ENCODE measurements at regions of chr1 and their contacts with region 1.

Region 1: DNA sequence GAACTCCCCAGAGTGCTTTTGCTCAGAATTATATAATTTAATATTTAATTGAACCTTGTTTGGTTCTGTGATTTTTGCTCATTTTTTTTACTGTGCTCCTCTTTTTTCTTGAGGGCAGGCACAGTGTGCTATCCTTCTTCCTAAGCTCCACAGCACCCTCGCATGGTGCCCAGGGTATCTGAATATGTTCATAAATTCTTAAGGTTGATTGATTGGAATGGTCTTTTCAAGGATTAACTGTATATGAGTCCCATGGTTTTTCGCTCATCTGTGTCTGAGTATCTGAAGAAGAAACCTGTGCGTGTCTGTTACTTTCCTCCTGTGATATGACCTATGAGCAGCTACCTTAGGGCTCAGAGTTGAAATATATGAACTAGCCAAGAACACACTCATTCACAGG is 393.7 kb downstream of the HLX start:
- DNase-seq: peak; percentile 68
- ATAC-seq: peak; percentile 88
- H3K4me3 ChIP-seq: no peak overlapping the region
- H3K27ac ChIP-seq: no peak overlapping the region
- H3K4me1 ChIP-seq: no peaks in the 10 kb centered on the region
- H3K27me3 ChIP-seq: no peaks in the 10 kb centered on the region
- CTCF ChIP-seq: peak; percentile 81

Region 2: GRCh38 chr1:220810179-220810653 is 462.7 kb before region 1 on chr1:
- CTCF ChIA-PET with region 1: no interaction called
- POLR2A ChIA-PET with region 1: no interaction called
- intact Hi-C with region 1: loop called (anchors 1 kb)
- DNase-seq: peak; percentile 83
- ATAC-seq: peak; percentile 72
- H3K4me3 ChIP-seq: no peak overlapping the region
- H3K27ac ChIP-seq: no peak overlapping the region
- H3K4me1 ChIP-seq: no peaks in the 10 kb centered on the region
- H3K27me3 ChIP-seq: no peaks in the 10 kb centered on the region
- CTCF ChIP-seq: peak; percentile 95

Region 3: GRCh38 chr1:220873868-220874655 is 398.9 kb before region 1 on chr1:
- CTCF ChIA-PET with region 1: interaction called, 7 read pairs
- POLR2A ChIA-PET with region 1: no interaction called
- intact Hi-C with region 1: loop called (anchors 1 kb)
- DNase-seq: peak; percentile 72
- ATAC-seq: peak; percentile 40
- H3K4me3 ChIP-seq: no peak overlapping the region
- H3K27ac ChIP-seq: no peak overlapping the region
- H3K4me1 ChIP-seq: peaks cover 8% of the 10 kb centered on the region; the same call in 1 of the 2 replicates
- H3K27me3 ChIP-seq: no peaks in the 10 kb centered on the region
- CTCF ChIP-seq: peak; percentile 97

Region 4: GRCh38 chr1:220990427-220991339 is 282.3 kb before region 1 on chr1:
- CTCF ChIA-PET with region 1: no interaction called
- POLR2A ChIA-PET with region 1: no interaction called
- intact Hi-C with region 1: loop called (anchors 1 kb)
- DNase-seq: peak; percentile 85
- ATAC-seq: peak; percentile 87
- H3K4me3 ChIP-seq: no peak overlapping the region
- H3K27ac ChIP-seq: peak overlapping the region; percentile 56
- H3K4me1 ChIP-seq: peaks cover 20% of the 10 kb centered on the region
- H3K27me3 ChIP-seq: no peaks in the 10 kb centered on the region
- CTCF ChIP-seq: peak; percentile 63

Region 5: GRCh38 chr1:221182791-221183533 is 90.0 kb before region 1 on chr1:
- CTCF ChIA-PET with region 1: no interaction called
- POLR2A ChIA-PET with region 1: no interaction called
- intact Hi-C with region 1: no loop called
- DNase-seq: no peak
- ATAC-seq: peak; percentile 56; the same call in 1 of the 2 replicates
- H3K4me3 ChIP-seq: no peak overlapping the region
- H3K27ac ChIP-seq: no peak overlapping the region
- H3K4me1 ChIP-seq: peaks cover 6% of the 10 kb centered on the region; the same call in 1 of the 2 replicates
- H3K27me3 ChIP-seq: no peaks in the 10 kb centered on the region
- CTCF ChIP-seq: no peak

Region 6: GRCh38 chr1:221449801-221450470 is 177.0 kb after region 1 on chr1:
- CTCF ChIA-PET with region 1: no interaction called
- POLR2A ChIA-PET with region 1: no interaction called
- intact Hi-C with region 1: no loop called
- DNase-seq: peak; percentile 76
- ATAC-seq: peak; percentile 62
- H3K4me3 ChIP-seq: peak overlapping the region; percentile 12
- H3K27ac ChIP-seq: peak overlapping the region; percentile 83
- H3K4me1 ChIP-seq: peaks cover 20% of the 10 kb centered on the region
- H3K27me3 ChIP-seq: no peaks in the 10 kb centered on the region
- CTCF ChIP-seq: no peak